Naive thymus-derived CD4-positive, alpha-beta T cell (primary cell): ENCODE measurements at regions of chr12 and their contacts with region 1.

Region 1: GRCh38 chr12:55926738-55927587 is 731 bp downstream of the PYM1 start:
- DNase-seq: peak; percentile 70 to 91 (median 87)
- ATAC-seq: peak; percentile 65
- H3K4me3 ChIP-seq: peak overlapping the region; percentile 99
- H3K4me3 Mint-ChIP-seq: peak overlapping the region; percentile 96 to 100 (median 98)
- H3K27ac ChIP-seq: peak overlapping the region; percentile 90
- H3K27ac Mint-ChIP-seq: peak overlapping the region; percentile 96 to 100 (median 97)
- H3K4me1 ChIP-seq: peaks cover 25 to 28% of the 10 kb centered on the region in 2 donors
- H3K4me1 Mint-ChIP-seq: peaks cover 33 to 61% (median 50%) of the 10 kb centered on the region in 7 donors
- H3K27me3 ChIP-seq: no peaks in the 10 kb centered on the region
- H3K27me3 Mint-ChIP-seq: peaks cover 0 to 2% (median 0%) of the 10 kb centered on the region in 5 donors

Region 2: DNA sequence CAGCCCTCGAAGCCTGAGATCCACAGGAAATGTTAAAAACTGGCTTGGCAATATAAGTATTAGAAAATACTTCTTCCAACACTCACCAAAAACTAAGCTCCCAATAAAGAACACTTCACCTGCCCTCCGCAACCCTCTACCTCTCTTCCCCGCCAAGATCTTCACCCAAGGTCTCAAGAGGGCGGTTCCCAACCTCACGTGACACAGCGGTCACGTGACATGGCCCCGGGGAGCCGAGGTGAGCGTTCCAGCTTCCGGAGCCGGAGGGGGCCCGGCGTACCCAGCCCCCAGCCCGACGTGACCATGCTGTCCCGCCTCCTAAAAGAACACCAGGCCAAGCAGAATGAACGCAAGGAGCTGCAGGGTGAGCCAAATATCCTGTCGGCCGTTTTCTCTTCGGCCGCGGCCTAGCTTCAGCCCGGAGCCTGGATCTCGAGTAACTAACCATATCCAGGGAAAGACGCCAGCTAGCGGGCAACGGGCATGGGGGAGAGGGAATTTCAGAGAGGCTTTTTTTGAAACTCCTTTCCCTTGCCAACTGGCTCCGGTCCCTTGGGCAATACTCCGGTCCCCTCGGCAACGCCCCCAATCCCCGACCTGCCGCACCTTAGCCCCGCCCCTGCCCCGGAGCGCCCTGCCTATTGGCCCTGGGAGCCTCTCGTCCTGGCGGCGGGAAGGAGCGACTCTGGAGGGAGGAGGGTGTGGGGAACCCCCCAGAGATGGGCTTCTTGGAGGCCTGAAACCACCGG is 211.0 kb before region 1 on chr12 and contains the start of gene BLOC1S1:
- CTCF ChIA-PET with region 1: no interaction called
- POLR2A ChIA-PET with region 1: interaction called, 8 read pairs
- intact Hi-C with region 1: loop called in 1 of 2 experiments (anchors 1 kb)
- DNase-seq: peak; percentile 82 to 95 (median 90)
- ATAC-seq: peak; percentile 96
- H3K4me3 ChIP-seq: peak within 1 kb of the TSS; percentile 96
- H3K4me3 Mint-ChIP-seq: peak within 1 kb of the TSS; percentile 83 to 98 (median 94)
- H3K27ac ChIP-seq: peak within 1 kb of the TSS; percentile 92
- H3K27ac Mint-ChIP-seq: peak within 1 kb of the TSS; percentile 91 to 98 (median 97)
- H3K4me1 ChIP-seq: peaks cover 19 to 23% of the 10 kb centered on the region in 2 donors
- H3K4me1 Mint-ChIP-seq: peaks cover 15 to 41% (median 36%) of the 10 kb centered on the region in 7 donors
- H3K27me3 ChIP-seq: no peaks in the 10 kb centered on the region
- H3K27me3 Mint-ChIP-seq: peaks cover 0 to 21% (median 0%) of the 10 kb centered on the region in 5 donors
- total RNA-seq, gene BLOC1S1: 37.6 to 112 (median 71.5) TPM

Region 3: DNA sequence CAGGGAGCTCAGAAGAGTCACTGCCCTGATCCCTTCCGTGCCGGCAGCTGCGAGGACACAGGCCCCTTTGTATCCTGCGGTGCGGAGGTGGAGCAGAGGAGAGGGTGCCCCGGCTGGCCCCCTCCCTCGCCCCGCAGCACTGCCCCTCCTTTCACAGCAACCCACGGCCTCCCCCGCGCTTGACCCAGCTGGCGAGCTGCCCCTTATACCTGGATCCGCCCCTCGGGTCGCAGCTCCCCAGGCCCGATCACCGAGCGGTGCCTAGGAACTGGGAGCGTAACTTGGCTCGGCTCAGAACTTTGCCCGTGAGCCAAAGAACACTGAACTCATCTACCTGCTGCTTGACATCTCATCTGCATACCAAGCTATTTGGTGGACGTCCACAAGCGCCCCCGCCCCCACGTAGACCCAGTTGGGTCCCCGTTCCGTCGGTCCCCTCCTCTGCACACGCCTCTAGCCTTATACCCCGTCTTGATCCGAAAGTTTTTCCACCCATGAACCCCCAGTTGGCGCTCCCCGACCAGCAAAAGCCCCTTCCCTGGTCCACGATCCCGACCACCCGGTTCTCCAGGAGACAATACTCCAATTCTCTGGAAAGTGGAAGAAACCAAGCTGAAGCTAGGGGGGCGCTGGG is 96.9 kb before region 1 on chr12:
- CTCF ChIA-PET with region 1: interaction called, 22 read pairs
- POLR2A ChIA-PET with region 1: interaction called, 274 read pairs
- intact Hi-C with region 1: loop called (anchors 1 kb)
- DNase-seq: peak in 5 of 9 donors; percentile 16 to 44 (median 20)
- ATAC-seq: peak; percentile 2
- H3K4me3 ChIP-seq: peak overlapping the region; percentile 99
- H3K4me3 Mint-ChIP-seq: peak overlapping the region; percentile 88 to 99 (median 99)
- H3K27ac ChIP-seq: peak overlapping the region; percentile 84
- H3K27ac Mint-ChIP-seq: peak overlapping the region; percentile 85 to 98 (median 95)
- H3K4me1 ChIP-seq: peaks cover 37 to 40% of the 10 kb centered on the region in 2 donors
- H3K4me1 Mint-ChIP-seq: peaks cover 42 to 69% (median 53%) of the 10 kb centered on the region in 7 donors
- H3K27me3 ChIP-seq: no peaks in the 10 kb centered on the region
- H3K27me3 Mint-ChIP-seq: no peaks in the 10 kb centered on the region

Region 4: GRCh38 chr12:55966408-55967281 is 39.7 kb after region 1 on chr12 and contains the start of gene CDK2:
- CTCF ChIA-PET with region 1: no interaction called
- POLR2A ChIA-PET with region 1: interaction called, 9 read pairs
- intact Hi-C with region 1: loop called in 1 of 2 experiments (anchors 1 kb)
- DNase-seq: peak; percentile 70 to 95 (median 79)
- ATAC-seq: peak; percentile 99
- H3K4me3 ChIP-seq: peak within 1 kb of the TSS; percentile 73
- H3K4me3 Mint-ChIP-seq: peak within 1 kb of the TSS; percentile 88 to 97 (median 92)
- H3K27ac ChIP-seq: peak within 1 kb of the TSS; percentile 69
- H3K27ac Mint-ChIP-seq: peak within 1 kb of the TSS; percentile 61 to 94 (median 86)
- H3K4me1 ChIP-seq: peaks cover 12 to 18% of the 10 kb centered on the region in 2 donors
- H3K4me1 Mint-ChIP-seq: peaks cover 19 to 51% (median 33%) of the 10 kb centered on the region in 7 donors
- H3K27me3 ChIP-seq: no peaks in the 10 kb centered on the region
- H3K27me3 Mint-ChIP-seq: no peaks in the 10 kb centered on the region
- total RNA-seq, gene CDK2: 19.0 to 77.2 (median 24.1) TPM

Region 5: GRCh38 chr12:56104109-56104814 is 177.3 kb after region 1 on chr12 and contains the start of gene PA2G4:
- CTCF ChIA-PET with region 1: no interaction called
- POLR2A ChIA-PET with region 1: interaction called, 7 read pairs
- intact Hi-C with region 1: loop called (anchors 1 kb)
- DNase-seq: peak; percentile 83 to 97 (median 96)
- ATAC-seq: peak; percentile 93
- H3K4me3 ChIP-seq: peak within 1 kb of the TSS; percentile 87
- H3K4me3 Mint-ChIP-seq: peak within 1 kb of the TSS; percentile 91 to 100 (median 98)
- H3K27ac ChIP-seq: peak within 1 kb of the TSS; percentile 82
- H3K27ac Mint-ChIP-seq: peak within 1 kb of the TSS; percentile 92 to 99 (median 98)
- H3K4me1 ChIP-seq: peaks cover 36 to 37% of the 10 kb centered on the region in 2 donors
- H3K4me1 Mint-ChIP-seq: peaks cover 31 to 69% (median 64%) of the 10 kb centered on the region in 7 donors
- H3K27me3 ChIP-seq: no peaks in the 10 kb centered on the region
- H3K27me3 Mint-ChIP-seq: peaks cover 0 to under 1% (median 0%) of the 10 kb centered on the region in 5 donors
- total RNA-seq, gene PA2G4: 61.7 to 254 (median 109) TPM

Region 6: DNA sequence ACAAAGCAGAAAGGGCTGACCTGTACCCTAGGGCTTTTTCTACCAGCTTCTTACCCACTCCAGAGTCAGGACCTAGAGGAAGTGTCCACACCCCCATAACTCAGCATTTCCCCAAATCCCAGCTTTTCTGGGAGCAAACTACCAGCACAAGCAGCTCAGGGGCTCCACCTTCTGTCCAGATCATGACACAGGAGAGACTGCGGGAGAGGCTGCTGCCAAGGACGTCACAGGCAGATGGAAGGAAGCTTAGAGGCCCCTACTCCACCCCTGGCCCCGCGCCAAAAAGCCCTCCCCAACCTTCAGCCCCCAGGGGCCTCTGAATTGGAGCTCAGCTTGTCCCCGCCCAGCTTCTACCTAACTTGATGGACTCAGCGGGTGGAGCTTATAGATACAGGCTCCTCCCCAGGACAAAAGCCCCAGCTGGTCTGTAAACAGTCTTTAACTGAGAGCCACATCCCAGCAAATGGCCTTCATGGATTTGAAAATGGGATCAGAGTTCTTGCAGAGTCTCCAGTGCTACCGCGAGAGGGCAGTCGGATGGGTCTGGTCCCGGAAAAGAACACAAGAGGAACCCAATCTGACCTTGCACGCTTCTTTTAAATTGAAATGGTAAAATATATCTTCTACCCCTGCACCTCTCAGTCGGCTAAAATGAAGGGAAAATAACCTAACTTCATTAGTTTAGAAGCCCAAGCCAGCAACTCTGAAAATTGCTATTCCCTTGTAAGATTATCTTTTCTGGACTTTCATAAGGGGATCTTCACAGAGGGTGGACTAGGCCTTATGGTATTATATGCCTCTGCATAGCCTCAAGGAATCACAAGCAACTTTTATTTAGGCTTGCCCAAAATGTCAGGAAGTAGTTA is 709.9 kb after region 1 on chr12:
- CTCF ChIA-PET with region 1: no interaction called
- POLR2A ChIA-PET with region 1: no interaction called
- intact Hi-C with region 1: loop called in 1 of 2 experiments (anchors 5 kb)
- DNase-seq: peak; percentile 86 to 99 (median 94)
- ATAC-seq: peak; percentile 83
- H3K4me3 ChIP-seq: peak overlapping the region; percentile 73
- H3K4me3 Mint-ChIP-seq: peak overlapping the region; percentile 87 to 100 (median 96)
- H3K27ac ChIP-seq: peak overlapping the region; percentile 83
- H3K27ac Mint-ChIP-seq: peak overlapping the region; percentile 89 to 99 (median 97)
- H3K4me1 ChIP-seq: peaks cover 27 to 36% of the 10 kb centered on the region in 2 donors
- H3K4me1 Mint-ChIP-seq: peaks cover 28 to 69% (median 57%) of the 10 kb centered on the region in 7 donors
- H3K27me3 ChIP-seq: no peaks in the 10 kb centered on the region
- H3K27me3 Mint-ChIP-seq: no peaks in the 10 kb centered on the region

Region 7: DNA sequence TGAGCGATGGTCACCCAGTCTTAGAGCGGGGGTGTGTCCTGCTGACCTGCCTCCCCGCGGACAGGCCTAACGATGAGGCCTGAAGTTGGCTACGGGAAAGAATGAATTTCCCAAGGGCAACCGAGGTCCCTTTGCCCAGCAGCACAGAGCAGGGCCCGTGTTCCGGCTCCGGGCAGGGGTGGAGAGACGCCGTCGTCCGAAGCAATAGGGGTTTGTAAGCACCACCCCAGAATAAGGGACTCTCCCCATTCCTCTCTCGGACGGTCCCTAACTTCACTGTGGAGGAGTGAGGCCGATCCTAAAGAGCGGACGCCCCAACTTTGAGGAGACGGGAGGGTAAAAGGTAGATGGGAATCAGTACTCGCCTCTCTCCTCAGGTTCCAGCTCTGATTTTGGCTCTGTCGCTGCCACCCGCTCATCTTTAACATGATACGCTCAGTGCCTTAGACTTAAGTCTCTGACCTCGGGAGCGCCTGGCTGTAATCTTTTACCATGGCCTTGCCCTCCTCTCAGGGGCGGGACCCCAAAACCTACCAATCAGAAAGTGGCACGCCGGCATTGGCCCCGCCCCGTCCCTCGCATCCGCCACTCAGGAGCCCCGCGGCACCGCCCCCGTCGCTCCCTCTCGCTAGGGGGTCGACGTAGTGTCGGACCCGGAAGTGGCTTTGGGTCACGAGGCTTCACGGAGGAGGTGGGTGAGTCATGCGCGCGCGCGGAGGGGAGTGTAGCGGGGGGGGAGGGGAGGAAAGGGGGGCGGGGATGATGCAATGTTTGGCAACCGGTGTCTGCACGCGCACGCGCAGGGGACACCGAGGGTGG is 1593.3 kb after region 1 on chr12 and contains the start of gene DDIT3:
- CTCF ChIA-PET with region 1: no interaction called
- POLR2A ChIA-PET with region 1: no interaction called
- intact Hi-C with region 1: loop called in 1 of 2 experiments (anchors 5 kb)
- DNase-seq: peak; percentile 98 to 99 (median 99)
- ATAC-seq: peak; percentile 89
- H3K4me3 ChIP-seq: peak within 1 kb of the TSS; percentile 100
- H3K4me3 Mint-ChIP-seq: peak within 1 kb of the TSS; percentile 89 to 99 (median 98)
- H3K27ac ChIP-seq: peak within 1 kb of the TSS; percentile 95
- H3K27ac Mint-ChIP-seq: peak within 1 kb of the TSS; percentile 97 to 100 (median 99)
- H3K4me1 ChIP-seq: peaks cover 32 to 41% of the 10 kb centered on the region in 2 donors
- H3K4me1 Mint-ChIP-seq: peaks cover 47 to 80% (median 56%) of the 10 kb centered on the region in 7 donors
- H3K27me3 ChIP-seq: no peaks in the 10 kb centered on the region
- H3K27me3 Mint-ChIP-seq: peaks cover 0 to 7% (median 0%) of the 10 kb centered on the region in 5 donors
- total RNA-seq, gene DDIT3: 19.6 to 124 (median 51.6) TPM